Calu3 (cell line): ENCODE measurements at regions of chrX and their contacts with region 1.

Region 1: GRCh38 chrX:79081895-79082512 is 62.5 kb upstream of the GPR174 start:
- DNase-seq: peak; percentile 21
- H3K4me3 Mint-ChIP-seq: no peak overlapping the region
- H3K27ac Mint-ChIP-seq: no peak overlapping the region
- H3K4me1 Mint-ChIP-seq: no peaks in the 10 kb centered on the region
- H3K27me3 Mint-ChIP-seq: no peaks in the 10 kb centered on the region
- CTCF ChIP-seq: peak; percentile 20

Region 2: DNA sequence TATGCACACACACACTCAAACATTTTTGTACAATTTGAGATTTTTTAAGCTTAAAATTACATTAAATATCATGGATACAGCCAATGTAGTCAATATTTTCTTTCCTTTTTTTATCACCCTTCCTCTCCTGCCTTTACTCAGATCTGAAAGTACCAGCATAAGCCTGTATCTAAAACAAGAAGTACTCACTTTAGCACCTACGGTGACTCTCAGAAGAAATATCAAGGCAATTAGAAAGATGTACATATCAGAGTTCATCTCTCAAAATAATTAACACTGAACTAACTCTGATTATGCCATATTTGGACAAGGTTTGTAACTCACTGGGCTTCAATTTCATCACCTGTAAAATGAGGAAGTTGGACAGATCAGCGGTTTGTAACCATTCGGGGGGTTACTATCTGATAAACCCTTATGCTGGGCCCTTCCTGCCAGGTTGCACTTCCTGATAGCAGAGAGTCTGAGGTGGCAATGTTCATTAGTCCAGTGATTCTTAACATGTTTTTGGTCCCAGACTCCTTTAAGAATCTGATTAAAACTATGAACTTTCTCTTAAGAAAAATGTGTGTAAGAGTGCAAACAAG is 56.7 kb after region 1 on chrX:
- CTCF ChIA-PET with region 1: no interaction called
- intact Hi-C with region 1: no loop called
- DNase-seq: no peak
- H3K4me3 Mint-ChIP-seq: no peak overlapping the region
- H3K27ac Mint-ChIP-seq: no peak overlapping the region
- H3K4me1 Mint-ChIP-seq: no peaks in the 10 kb centered on the region
- H3K27me3 Mint-ChIP-seq: no peaks in the 10 kb centered on the region
- CTCF ChIP-seq: no peak

Region 3: DNA sequence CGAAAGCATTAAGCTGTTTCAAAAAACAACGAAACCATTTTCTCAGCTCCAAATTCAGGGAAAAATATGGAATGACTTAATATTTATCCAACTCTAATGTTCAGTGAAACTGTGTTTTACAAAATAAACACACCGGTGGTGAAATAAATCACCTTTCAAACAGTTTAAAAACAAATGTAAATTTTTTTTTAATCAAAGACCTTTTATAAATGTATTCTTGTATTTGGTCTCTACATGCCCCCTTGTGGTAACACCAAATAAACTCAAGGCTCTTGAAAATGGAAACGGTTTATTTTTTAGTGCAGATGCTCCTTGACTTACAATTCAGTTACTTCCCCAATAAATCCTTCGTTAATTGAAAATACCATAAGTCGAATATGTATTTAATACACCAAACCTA is 331.0 kb after region 1 on chrX:
- CTCF ChIA-PET with region 1: no interaction called
- intact Hi-C with region 1: loop called (anchors 5 kb)
- DNase-seq: no peak
- H3K4me3 Mint-ChIP-seq: peak overlapping the region; percentile 36
- H3K27ac Mint-ChIP-seq: peak overlapping the region; percentile 27
- H3K4me1 Mint-ChIP-seq: peaks cover 8% of the 10 kb centered on the region
- H3K27me3 Mint-ChIP-seq: no peaks in the 10 kb centered on the region
- CTCF ChIP-seq: peak; percentile 39

Region 4: GRCh38 chrX:79452881-79453280 is 370.9 kb after region 1 on chrX:
- CTCF ChIA-PET with region 1: no interaction called
- intact Hi-C with region 1: loop called (anchors 5 kb)
- DNase-seq: no peak
- H3K4me3 Mint-ChIP-seq: no peak overlapping the region
- H3K27ac Mint-ChIP-seq: no peak overlapping the region
- H3K4me1 Mint-ChIP-seq: no peaks in the 10 kb centered on the region
- H3K27me3 Mint-ChIP-seq: no peaks in the 10 kb centered on the region
- CTCF ChIP-seq: no peak